Activated naive CD4-positive, alpha-beta T cell treated with anti-CD3 and anti-CD28 coated beads for 36 hours (primary cell): ENCODE measurements at regions of chr14 and their contacts with region 1.

Region 1: DNA sequence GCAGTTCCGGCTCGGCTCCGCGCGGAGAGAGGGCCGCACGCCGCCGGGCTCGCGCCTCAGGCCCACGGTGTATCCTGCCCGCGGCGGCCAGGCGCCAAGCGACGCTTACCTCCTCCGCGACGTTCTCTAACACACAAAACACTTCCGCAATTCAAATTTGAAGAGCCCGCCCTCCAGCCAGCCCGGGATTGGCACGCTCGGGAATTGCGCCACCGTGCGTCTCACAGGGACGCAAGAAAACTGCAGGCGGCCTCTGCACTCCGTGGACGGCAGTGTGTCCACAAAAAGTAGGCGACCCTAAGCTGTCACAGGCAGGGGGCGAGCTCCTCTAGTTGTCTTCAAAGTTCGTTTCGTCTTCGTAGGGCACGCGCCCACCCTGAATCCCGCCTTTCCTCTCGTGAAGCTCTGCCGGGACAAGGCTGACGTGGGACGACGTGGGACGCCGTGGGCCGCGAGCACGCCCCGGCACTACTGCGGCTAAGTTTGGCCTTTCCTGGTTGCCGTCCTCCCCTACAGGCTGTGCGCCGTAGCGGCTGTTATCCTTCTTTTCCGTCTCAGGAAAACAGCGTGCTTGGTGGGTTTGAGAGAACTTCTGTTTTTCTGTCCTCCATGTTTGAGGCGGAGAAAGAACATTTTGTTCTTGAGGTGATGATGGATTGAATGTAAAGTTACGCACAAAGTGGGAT is at the start of gene MIS18BP1:
- DNase-seq: peak; percentile 96
- H3K4me3 Mint-ChIP-seq: peak within 1 kb of the TSS; percentile 89
- H3K27ac Mint-ChIP-seq: peak within 1 kb of the TSS; percentile 91
- H3K4me1 Mint-ChIP-seq: peaks cover 15% of the 10 kb centered on the region
- H3K27me3 Mint-ChIP-seq: no peaks in the 10 kb centered on the region
- total RNA-seq, gene MIS18BP1: 55.5 to 56.8 TPM

Region 2: GRCh38 chr14:44897045-44897844 is 356.0 kb before region 1 on chr14:
- CTCF ChIA-PET with region 1: no interaction called
- intact Hi-C with region 1: loop called (anchors 1 kb)
- DNase-seq: peak; percentile 99
- H3K4me3 Mint-ChIP-seq: peak overlapping the region; percentile 89
- H3K27ac Mint-ChIP-seq: peak overlapping the region; percentile 83
- H3K4me1 Mint-ChIP-seq: peaks cover 13% of the 10 kb centered on the region
- H3K27me3 Mint-ChIP-seq: no peaks in the 10 kb centered on the region

Region 3: GRCh38 chr14:45083971-45084722 is 169.1 kb before region 1 on chr14 and contains the start of gene PRPF39:
- CTCF ChIA-PET with region 1: no interaction called
- intact Hi-C with region 1: loop called (anchors 1 kb)
- DNase-seq: peak; percentile 94
- H3K4me3 Mint-ChIP-seq: peak within 1 kb of the TSS; percentile 96
- H3K27ac Mint-ChIP-seq: peak within 1 kb of the TSS; percentile 93
- H3K4me1 Mint-ChIP-seq: peaks cover 49% of the 10 kb centered on the region
- H3K27me3 Mint-ChIP-seq: no peaks in the 10 kb centered on the region
- total RNA-seq, gene PRPF39: 32.0 to 35.6 TPM

Region 4: DNA sequence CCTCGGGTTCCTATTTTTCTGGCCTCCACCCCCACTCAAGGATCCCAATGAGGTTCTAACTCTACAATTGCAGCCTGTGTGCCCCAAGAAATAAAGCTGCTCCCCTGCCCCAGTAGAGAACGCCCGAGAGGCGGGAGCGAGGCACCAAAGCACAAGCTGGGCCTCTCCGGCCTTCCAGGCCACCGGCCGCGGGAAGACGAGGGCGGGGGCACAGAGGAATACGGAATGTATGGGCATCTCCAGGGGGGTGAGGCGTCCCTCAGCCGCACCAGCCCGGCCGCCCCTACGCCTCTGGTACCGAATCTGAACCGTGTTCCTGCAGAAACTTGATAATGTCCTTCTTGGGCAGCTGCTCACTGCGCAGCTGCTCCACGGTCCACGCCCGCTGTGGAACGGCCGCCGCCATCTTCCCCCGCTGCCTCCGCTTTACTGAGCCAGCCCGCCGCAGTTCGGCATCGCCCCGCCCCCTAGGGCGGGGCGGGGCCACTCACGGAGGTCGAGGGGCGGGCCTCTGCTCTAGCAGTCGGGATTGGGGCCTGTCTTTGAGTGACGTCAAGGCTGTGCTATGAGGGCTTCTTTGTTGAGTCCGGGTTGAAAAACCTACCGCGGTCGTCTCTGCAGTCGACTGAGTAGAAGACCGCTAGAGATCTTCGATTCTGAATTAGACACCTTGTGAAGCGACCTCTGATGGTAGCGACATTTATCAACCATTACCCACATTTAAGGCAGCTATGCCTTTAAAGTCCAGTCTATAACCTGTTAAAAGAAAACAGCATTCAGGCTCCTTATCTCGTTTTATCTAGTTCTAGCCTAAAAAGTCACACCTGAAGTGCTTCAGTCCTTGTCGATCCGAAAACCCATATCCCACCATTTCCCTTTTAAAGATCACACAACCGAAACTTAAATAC is 118.9 kb before region 1 on chr14 and contains the start of gene FKBP3:
- CTCF ChIA-PET with region 1: interaction called, 3 read pairs
- intact Hi-C with region 1: loop called (anchors 1 kb)
- DNase-seq: peak; percentile 97
- H3K4me3 Mint-ChIP-seq: peak within 1 kb of the TSS; percentile 99
- H3K27ac Mint-ChIP-seq: peak within 1 kb of the TSS; percentile 98
- H3K4me1 Mint-ChIP-seq: peaks cover 37% of the 10 kb centered on the region
- H3K27me3 Mint-ChIP-seq: no peaks in the 10 kb centered on the region
- total RNA-seq, gene FKBP3: 47.6 to 50.8 TPM

Region 5: GRCh38 chr14:45222485-45223262 is 30.5 kb before region 1 on chr14:
- CTCF ChIA-PET with region 1: interaction called, 3 read pairs
- intact Hi-C with region 1: loop called (anchors 2 kb)
- DNase-seq: no peak
- H3K4me3 Mint-ChIP-seq: no peak overlapping the region
- H3K27ac Mint-ChIP-seq: peak overlapping the region; percentile 8
- H3K4me1 Mint-ChIP-seq: peaks cover 14% of the 10 kb centered on the region
- H3K27me3 Mint-ChIP-seq: no peaks in the 10 kb centered on the region

Region 6: GRCh38 chr14:45434221-45434620 is 181.0 kb after region 1 on chr14:
- CTCF ChIA-PET with region 1: no interaction called
- intact Hi-C with region 1: no loop called
- DNase-seq: no peak
- H3K4me3 Mint-ChIP-seq: no peak overlapping the region
- H3K27ac Mint-ChIP-seq: no peak overlapping the region
- H3K4me1 Mint-ChIP-seq: no peaks in the 10 kb centered on the region
- H3K27me3 Mint-ChIP-seq: peaks cover 6% of the 10 kb centered on the region